ENCODE measurements at regions of chr1 and their contacts with region 1.

Region 1: DNA sequence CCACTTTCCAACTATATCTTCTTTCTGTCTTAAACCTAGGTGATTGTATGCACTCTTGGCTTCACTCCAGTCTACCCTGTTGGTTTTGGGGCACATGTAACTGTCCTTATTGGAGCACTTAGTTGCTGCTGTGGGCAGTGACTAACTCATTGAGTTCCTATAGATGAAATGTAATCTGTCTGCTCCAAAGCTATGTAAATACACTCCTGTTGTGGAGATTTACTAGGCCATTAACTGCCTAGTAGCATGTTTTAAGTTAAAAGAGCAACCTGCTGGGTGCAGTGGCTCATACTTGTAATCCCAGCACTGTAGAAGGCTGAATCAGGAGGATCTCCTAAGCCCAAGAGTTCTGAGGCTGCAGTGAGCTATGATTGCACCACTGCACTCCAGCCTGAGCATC is 137.6 kb downstream of the ZMYM4 start:
- DNase-seq: no peak
- H3K4me3 ChIP-seq: no peak overlapping the region
- H3K27ac ChIP-seq: no peak overlapping the region
- H3K4me1 ChIP-seq: no peaks in the 10 kb centered on the region
- CTCF ChIP-seq: no peak

Region 2: DNA sequence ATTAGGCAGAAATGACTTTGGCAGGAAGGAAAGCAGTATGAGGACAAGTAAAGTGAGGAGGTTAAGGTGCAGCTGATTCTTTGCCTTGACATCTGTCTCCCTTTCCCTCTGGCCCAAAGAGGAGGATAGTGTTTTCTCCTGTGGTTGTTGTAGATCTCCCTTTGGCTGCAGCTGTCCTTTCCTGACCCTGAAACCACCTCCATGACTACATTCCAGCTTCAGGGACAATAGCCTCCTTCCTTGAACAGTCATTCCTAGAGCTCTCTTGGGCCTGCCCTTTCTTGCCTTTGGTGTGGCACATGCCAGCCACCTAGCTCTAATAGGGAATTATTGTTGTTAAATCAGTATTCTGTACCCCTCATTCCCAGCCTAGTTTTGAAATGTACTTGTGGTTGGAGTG is 320.7 kb before region 1 on chr1:
- CTCF ChIA-PET with region 1: no interaction called
- POLR2A ChIA-PET with region 1: no interaction called
- intact Hi-C with region 1: no loop called
- DNase-seq: no peak
- H3K4me3 ChIP-seq: no peak overlapping the region
- H3K27ac ChIP-seq: no peak overlapping the region
- H3K4me1 ChIP-seq: peaks cover 5% of the 10 kb centered on the region
- CTCF ChIP-seq: no peak

Region 3: DNA sequence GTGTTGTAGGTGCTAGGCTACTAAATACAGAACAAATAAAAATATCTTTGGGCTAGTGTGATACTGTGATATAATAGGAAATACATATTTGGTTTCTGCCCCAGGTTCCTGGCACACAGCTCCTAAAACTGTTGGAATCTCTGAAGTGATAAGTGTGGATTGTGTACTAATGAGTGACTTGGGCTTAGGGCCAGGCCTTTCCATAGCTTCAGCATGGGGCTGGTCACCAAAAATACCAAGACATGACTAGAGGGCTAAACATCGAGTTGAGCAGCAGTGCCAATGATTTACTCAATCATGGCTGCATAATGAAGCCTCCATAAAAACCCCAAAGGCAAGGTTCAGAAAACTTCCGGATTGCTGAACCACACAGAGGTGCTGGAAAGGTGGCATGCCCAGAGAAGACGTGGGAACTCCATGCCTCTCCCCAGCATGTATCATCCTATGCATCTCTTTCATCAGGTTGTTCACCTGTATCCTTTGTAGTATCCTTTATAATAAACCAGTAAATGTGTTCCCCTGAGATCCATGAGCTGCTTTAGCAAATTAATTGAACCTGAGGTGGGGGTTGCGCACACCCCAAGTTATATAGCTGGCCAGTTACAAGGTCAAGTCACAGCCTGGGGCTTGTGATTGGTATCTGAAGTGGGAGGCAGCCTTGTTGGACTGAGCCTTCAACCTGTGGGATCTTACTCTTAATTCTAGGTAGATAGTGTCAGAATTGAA is 86.0 kb before region 1 on chr1:
- CTCF ChIA-PET with region 1: no interaction called
- POLR2A ChIA-PET with region 1: no interaction called
- intact Hi-C with region 1: loop called (anchors 10 kb)
- DNase-seq: no peak
- H3K4me3 ChIP-seq: no peak overlapping the region
- H3K27ac ChIP-seq: no peak overlapping the region
- H3K4me1 ChIP-seq: no peaks in the 10 kb centered on the region
- CTCF ChIP-seq: no peak